ENCODE measurements at regions of chr10 and their contacts with region 1.

Region 1: GRCh38 chr10:436911-437665 is 252.4 kb downstream of the DIP2C start:
- DNase-seq: no peak
- H3K4me3 ChIP-seq: no peak overlapping the region
- H3K27ac ChIP-seq: no peak overlapping the region
- H3K4me1 ChIP-seq: no peaks in the 10 kb centered on the region
- H3K27me3 ChIP-seq: peaks cover 26% of the 10 kb centered on the region; the same call in 1 of the 2 replicates
- CTCF ChIP-seq: no peak

Region 2: GRCh38 chr10:689433-690371 is 252.6 kb after region 1 on chr10 and contains the start of gene DIP2C:
- CTCF ChIA-PET with region 1: no interaction called
- POLR2A ChIA-PET with region 1: interaction called, 20 read pairs
- intact Hi-C with region 1: no loop called
- DNase-seq: peak in 1 of 2 experiments; percentile 19
- H3K4me3 ChIP-seq: no peak within 1 kb of the TSS
- H3K27ac ChIP-seq: no peak within 1 kb of the TSS
- H3K4me1 ChIP-seq: no peaks in the 10 kb centered on the region
- H3K27me3 ChIP-seq: no peaks in the 10 kb centered on the region; the same call in 1 of the 2 replicates
- CTCF ChIP-seq: no peak
- total RNA-seq, gene DIP2C: 0.83 and 1.1 TPM in 2 replicates

Region 3: GRCh38 chr10:1440897-1441296 is 1003.8 kb after region 1 on chr10:
- CTCF ChIA-PET with region 1: no interaction called
- POLR2A ChIA-PET with region 1: no interaction called
- intact Hi-C with region 1: no loop called
- DNase-seq: no peak
- H3K4me3 ChIP-seq: no peak overlapping the region
- H3K27ac ChIP-seq: no peak overlapping the region
- H3K4me1 ChIP-seq: no peaks in the 10 kb centered on the region
- H3K27me3 ChIP-seq: peaks cover 17% of the 10 kb centered on the region; the same call in 1 of the 2 replicates
- CTCF ChIP-seq: no peak